ENCODE measurements at regions of chr4 and their contacts with region 1.

Region 1: GRCh38 chr4:78297116-78297800 is 240.1 kb downstream of the FRAS1 start:
- DNase-seq: no peak
- H3K4me3 Mint-ChIP-seq: peak overlapping the region; percentile 9
- H3K27ac Mint-ChIP-seq: no peak overlapping the region
- H3K4me1 Mint-ChIP-seq: peaks cover 11% of the 10 kb centered on the region
- H3K27me3 Mint-ChIP-seq: peaks cover 12% of the 10 kb centered on the region

Region 2: GRCh38 chr4:78312989-78313753 is 15.9 kb after region 1 on chr4:
- intact Hi-C with region 1: loop called (anchors 1 kb)
- DNase-seq: no peak
- H3K4me3 Mint-ChIP-seq: no peak overlapping the region
- H3K27ac Mint-ChIP-seq: peak overlapping the region; percentile 2
- H3K4me1 Mint-ChIP-seq: peaks cover 18% of the 10 kb centered on the region
- H3K27me3 Mint-ChIP-seq: peaks cover 12% of the 10 kb centered on the region